ENCODE measurements at regions of chr17 and their contacts with region 1.

Region 1: DNA sequence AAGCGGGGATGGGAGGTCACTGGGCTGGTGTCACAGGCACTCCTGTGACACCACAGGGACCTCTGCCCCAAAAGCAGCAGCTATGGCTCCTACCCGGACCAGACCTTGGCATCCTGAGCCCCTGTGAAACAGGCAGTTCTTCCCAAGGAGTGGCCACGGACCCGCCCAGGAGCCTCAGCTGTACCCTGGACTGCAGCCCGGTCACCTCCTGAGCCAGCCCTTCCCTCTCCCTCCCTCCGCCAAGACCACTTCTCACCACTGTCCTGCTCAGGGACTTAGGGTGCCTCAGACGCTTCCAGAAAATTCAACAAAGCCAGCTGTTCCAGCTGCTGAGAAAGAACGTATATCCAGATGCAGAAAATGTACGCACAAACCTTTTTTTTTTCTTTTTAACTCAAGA is 13.9 kb upstream of the NCBP3 start:
- DNase-seq: no peak
- CTCF ChIP-seq: no peak

Region 2: DNA sequence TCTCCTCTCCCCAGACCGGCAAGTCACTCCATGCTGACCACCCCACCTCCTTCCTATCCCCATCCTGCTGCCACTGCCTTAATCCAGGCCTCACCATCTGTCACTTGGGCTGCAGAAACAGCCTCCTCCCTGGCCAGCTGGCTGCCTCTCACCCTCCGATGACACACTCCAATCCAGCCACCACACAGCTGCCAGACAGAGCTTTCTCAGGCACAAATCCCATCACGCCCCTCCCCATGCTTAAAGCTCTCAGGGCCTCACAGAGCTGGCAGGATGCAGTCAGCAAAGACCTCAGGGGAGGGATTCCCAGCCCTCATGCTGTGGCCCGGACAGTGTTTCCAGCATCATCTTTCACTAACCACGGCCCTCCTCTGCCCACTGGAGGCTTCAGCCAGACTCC is 19.2 kb after region 1 on chr17:
- CTCF ChIA-PET with region 1: interaction called, 21 read pairs
- POLR2A ChIA-PET with region 1: no interaction called
- DNase-seq: no peak
- CTCF ChIP-seq: no peak